Activated CD4-positive, alpha-beta T cell treated with anti-CD3 and anti-CD28 coated beads for 36 hours (primary cell): ENCODE measurements at regions of chr5 and their contacts with region 1.

Region 1: DNA sequence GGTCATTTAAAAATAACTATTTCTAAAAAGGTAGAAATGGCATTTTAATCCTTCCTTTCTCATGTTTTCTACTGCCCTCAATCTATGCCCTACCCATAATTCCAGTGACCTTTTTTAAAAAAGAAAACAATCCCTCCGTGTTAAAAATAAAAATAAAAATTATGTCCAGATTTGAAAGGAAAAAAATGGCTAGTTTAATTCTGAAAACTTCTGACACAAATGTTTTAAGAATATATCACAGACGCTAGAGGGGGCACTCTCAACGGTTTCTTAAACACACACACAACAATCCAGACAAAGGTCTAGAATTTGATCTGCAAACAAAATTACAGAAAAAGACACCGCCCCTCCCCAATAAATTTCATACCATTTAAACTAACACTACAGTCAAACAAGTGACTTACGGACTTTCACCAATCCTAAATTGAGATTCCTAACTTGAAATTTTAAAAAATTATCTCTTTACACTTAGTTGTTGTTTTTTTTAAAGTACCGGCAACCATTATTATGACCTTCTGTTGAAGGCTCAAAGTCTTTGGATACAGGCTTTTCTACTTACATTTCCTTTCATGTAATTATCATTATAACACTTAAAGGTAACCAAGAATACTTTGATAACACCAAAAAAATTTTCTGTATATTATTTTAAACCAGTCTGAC is 38.2 kb downstream of the CLINT1 start:
- DNase-seq: peak; percentile 42
- ATAC-seq: no peak
- H3K4me3 Mint-ChIP-seq: no peak overlapping the region
- H3K27ac Mint-ChIP-seq: no peak overlapping the region
- H3K4me1 Mint-ChIP-seq: peaks cover 38% of the 10 kb centered on the region
- H3K27me3 Mint-ChIP-seq: no peaks in the 10 kb centered on the region

Region 2: DNA sequence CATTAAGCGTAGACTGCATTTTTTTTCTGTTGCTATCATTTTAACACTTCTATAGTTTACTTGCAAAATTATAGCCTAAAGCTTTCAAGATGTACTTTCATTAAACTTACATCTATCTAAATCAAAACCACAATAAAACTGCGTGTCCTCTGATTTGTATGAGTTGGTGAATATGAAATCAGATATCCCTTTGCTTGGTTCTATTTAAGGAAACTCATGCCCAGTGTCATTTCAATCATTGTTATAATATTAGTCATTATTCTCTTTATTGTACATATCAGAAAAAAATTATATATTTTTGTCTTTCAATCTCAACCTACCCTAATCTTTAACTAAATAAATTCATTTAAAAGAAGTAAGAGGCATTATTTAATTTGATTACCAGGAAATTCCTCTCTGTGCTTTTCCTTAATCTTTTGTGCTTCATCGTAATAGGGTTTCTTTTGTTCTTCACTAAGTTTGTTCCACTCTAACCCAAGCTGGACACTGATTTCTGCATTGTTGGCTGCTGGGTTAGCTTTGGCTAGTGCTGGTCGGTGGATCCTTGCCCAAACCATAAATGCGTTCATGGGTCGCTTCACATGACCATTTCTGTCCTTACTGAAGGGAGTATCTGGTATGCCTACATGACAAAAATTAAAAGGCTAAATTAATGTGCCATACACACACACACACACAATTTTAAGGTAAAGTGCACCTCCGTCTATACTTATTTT is 172.3 kb before region 1 on chr5:
- CTCF ChIA-PET with region 1: no interaction called
- POLR2A ChIA-PET with region 1: no interaction called
- intact Hi-C with region 1: no loop called
- DNase-seq: no peak
- ATAC-seq: no peak
- H3K4me3 Mint-ChIP-seq: no peak overlapping the region
- H3K27ac Mint-ChIP-seq: no peak overlapping the region
- H3K4me1 Mint-ChIP-seq: peaks cover 15% of the 10 kb centered on the region
- H3K27me3 Mint-ChIP-seq: no peaks in the 10 kb centered on the region

Region 3: GRCh38 chr5:157917899-157918809 is 97.4 kb after region 1 on chr5:
- CTCF ChIA-PET with region 1: interaction called, 9 read pairs
- POLR2A ChIA-PET with region 1: no interaction called
- intact Hi-C with region 1: loop called (anchors 1 to 2 kb)
- DNase-seq: peak; percentile 86
- ATAC-seq: peak; percentile 87
- H3K4me3 Mint-ChIP-seq: no peak overlapping the region
- H3K27ac Mint-ChIP-seq: peak overlapping the region; percentile 51
- H3K4me1 Mint-ChIP-seq: peaks cover 26% of the 10 kb centered on the region
- H3K27me3 Mint-ChIP-seq: no peaks in the 10 kb centered on the region

Region 4: GRCh38 chr5:157994906-157995519 is 174.3 kb after region 1 on chr5:
- CTCF ChIA-PET with region 1: interaction called, 18 read pairs
- POLR2A ChIA-PET with region 1: no interaction called
- intact Hi-C with region 1: loop called (anchors 1 kb)
- DNase-seq: peak; percentile 70
- ATAC-seq: peak; percentile 93
- H3K4me3 Mint-ChIP-seq: peak overlapping the region; percentile 14
- H3K27ac Mint-ChIP-seq: no peak overlapping the region
- H3K4me1 Mint-ChIP-seq: peaks cover 11% of the 10 kb centered on the region
- H3K27me3 Mint-ChIP-seq: peaks cover 20% of the 10 kb centered on the region